Activated T-helper 2 cell treated with anti-CD3 and anti-CD28 coated beads, Interferon-gamma antibody, Interleukin-2, Interleukin-4, amounts not matched to agents 10 μg/mL and 5 μg/mL and 100 μg/mL, durations not matched to agents 14 hours and 24 hours and 36 hours (primary cell): ENCODE measurements at regions of chr4 and their contacts with region 1.

Region 1: DNA sequence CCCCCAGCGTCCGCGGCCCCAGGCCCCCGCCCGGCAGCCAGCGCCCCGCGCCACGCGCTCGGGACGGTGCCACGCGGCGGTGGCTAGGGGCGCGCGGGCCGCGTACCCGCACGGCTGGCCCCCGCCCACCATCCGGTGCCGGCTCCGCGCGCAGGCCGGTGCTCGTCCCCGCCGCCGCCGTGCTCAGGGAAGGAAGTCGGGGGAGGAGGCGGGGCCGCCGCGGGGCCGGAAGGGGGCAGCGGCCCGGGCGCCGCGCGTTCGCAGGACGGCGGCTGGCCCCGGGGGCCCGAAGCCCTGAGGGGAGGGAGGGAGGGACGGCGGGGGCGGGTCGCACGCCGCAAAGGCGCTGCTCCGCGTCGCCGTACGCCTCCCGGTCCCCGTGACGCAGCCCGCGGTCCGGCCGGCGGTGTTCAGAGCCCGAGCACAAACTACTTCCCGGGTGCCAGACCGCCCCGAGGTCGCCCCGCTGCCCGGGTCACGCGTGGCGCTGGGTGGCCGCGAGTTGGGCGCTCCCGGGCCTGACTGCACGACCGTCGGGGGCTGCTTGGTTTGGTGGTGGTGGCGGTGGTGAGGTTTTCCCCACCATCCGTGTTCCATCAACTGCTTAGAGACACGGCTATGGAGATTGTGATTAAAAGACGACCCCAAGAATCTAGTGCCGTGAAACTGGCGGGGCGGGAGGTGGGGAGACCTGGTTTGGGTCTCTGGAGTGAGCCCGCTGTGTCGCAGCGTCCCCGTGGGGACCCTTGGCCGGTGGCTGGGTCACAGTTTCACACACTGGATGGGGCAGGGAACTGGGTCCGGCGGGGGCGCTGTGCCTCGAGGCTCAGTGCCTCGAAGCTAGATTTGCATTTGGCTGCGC is at the start of gene DCTD:
- DNase-seq: peak; percentile 77
- H3K4me3 Mint-ChIP-seq: peak within 1 kb of the TSS; percentile 92
- H3K27ac Mint-ChIP-seq: peak within 1 kb of the TSS; percentile 97
- H3K4me1 Mint-ChIP-seq: peaks cover 35% of the 10 kb centered on the region
- H3K27me3 Mint-ChIP-seq: peaks cover 5% of the 10 kb centered on the region
- total RNA-seq, gene DCTD: 121 and 133 TPM in 2 replicates

Region 2: DNA sequence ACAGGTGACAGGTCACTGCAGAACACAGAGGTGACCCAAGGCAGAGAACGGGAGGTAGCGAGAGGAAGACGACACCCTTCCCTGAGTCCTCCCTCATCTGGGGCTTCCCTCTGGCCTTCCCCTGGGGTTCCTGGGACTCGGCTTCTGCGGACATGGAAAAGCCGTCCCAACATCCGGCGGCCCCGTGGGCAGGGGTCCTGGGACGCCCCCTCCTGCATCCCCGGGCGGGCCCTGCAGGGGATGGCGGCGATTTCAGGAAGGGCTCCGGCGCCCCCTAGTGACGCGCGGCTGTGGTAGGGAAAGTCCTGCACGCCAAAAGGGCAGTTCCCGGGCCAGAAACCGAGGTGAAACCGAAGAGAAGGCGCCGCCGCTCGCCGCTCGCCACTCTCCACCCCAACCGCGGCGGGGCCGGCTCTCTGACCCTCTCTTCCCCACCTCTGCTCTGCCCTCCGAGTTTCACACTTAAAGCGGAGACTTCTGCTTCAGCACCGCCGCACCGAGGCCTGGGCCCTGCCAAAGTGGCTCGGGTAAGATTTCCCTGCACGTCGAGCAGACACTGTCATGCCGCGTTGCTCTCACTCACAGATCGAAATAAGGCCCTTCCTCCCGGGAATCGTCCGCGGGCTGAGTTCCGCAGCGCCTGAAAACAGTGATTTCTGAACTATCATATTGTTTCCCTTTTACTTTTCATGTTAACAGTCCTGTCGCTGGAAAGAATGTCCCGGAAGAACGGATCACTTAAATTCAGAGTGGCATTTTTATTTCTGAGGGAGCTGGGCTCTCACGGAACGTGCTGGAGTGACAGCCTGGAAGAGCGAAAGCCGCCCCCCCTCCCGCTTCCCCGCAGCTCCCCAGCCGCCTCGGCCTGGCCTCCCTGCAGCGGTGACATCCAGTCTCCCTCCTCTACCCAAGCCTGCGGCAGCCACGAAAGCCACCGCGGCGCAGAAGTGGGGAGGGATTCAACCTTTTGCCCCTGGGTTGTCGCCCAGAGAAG is 110.9 kb before region 1 on chr4:
- intact Hi-C with region 1: loop called (anchors 1 kb)
- DNase-seq: peak; percentile 58
- H3K4me3 Mint-ChIP-seq: peak overlapping the region; percentile 57
- H3K27ac Mint-ChIP-seq: peak overlapping the region; percentile 39
- H3K4me1 Mint-ChIP-seq: peaks cover 16% of the 10 kb centered on the region
- H3K27me3 Mint-ChIP-seq: peaks cover 15% of the 10 kb centered on the region

Region 3: GRCh38 chr4:182843808-182844325 is 73.5 kb before region 1 on chr4:
- intact Hi-C with region 1: no loop called
- DNase-seq: no peak
- H3K4me3 Mint-ChIP-seq: no peak overlapping the region
- H3K27ac Mint-ChIP-seq: no peak overlapping the region
- H3K4me1 Mint-ChIP-seq: no peaks in the 10 kb centered on the region
- H3K27me3 Mint-ChIP-seq: no peaks in the 10 kb centered on the region

Region 4: GRCh38 chr4:182975806-182976205 is 58.4 kb after region 1 on chr4:
- intact Hi-C with region 1: loop called (anchors 2 kb)
- DNase-seq: peak; percentile 10
- H3K4me3 Mint-ChIP-seq: peak overlapping the region; percentile 41
- H3K27ac Mint-ChIP-seq: peak overlapping the region; percentile 92
- H3K4me1 Mint-ChIP-seq: peaks cover 27% of the 10 kb centered on the region
- H3K27me3 Mint-ChIP-seq: peaks cover 5% of the 10 kb centered on the region

Region 5: GRCh38 chr4:183011213-183011907 is 93.9 kb after region 1 on chr4:
- intact Hi-C with region 1: no loop called
- DNase-seq: no peak
- H3K4me3 Mint-ChIP-seq: no peak overlapping the region
- H3K27ac Mint-ChIP-seq: no peak overlapping the region
- H3K4me1 Mint-ChIP-seq: no peaks in the 10 kb centered on the region
- H3K27me3 Mint-ChIP-seq: peaks cover 6% of the 10 kb centered on the region

Region 6: GRCh38 chr4:183407128-183407585 is 489.7 kb after region 1 on chr4:
- intact Hi-C with region 1: loop called (anchors 5 kb)
- DNase-seq: peak; percentile 84
- H3K4me3 Mint-ChIP-seq: peak overlapping the region; percentile 79
- H3K27ac Mint-ChIP-seq: peak overlapping the region; percentile 65
- H3K4me1 Mint-ChIP-seq: peaks cover 13% of the 10 kb centered on the region
- H3K27me3 Mint-ChIP-seq: peaks cover 7% of the 10 kb centered on the region

Region 7: DNA sequence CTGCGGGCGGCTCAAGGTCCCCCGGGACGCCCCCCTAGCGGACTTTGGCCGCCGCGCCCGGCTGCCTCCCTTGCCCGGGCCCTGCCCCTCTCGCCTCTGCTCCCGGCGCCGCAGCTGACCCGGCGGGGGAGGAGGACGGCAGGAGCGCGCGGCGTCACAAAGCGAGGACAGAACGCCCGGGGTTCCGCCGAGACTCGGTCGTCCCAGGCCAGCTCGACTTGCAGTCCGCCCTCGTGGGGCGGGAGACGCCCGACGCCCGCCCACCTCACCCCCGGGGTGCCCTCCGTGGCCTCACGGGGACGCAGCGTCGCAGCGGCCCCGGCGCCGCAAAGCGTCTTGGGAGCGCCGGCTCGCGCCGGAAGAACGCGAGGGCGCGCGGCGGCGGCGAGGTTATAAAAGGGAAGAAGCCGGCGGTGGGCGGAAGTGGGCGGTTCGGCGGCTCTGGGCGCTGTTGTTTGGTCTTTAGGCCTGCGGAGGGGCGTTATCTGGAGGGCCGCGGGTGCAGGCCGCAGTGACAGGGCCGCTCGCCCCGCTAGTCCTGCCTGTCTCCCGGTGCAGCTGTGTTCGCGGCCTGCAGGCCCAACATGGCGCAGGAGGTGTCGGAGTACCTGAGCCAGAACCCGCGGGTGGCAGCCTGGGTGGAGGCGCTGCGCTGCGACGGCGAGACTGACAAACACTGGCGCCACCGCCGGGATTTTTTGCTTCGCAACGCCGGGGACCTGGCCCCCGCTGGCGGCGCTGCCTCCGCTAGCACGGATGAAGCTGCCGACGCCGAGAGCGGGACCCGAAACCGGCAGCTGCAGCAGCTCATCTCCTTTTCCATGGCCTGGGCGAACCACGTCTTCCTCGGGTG is 527.0 kb after region 1 on chr4 and contains the start of gene CDKN2AIP:
- intact Hi-C with region 1: loop called (anchors 2 kb)
- DNase-seq: peak; percentile 94
- H3K4me3 Mint-ChIP-seq: peak within 1 kb of the TSS; percentile 99
- H3K27ac Mint-ChIP-seq: peak within 1 kb of the TSS; percentile 98
- H3K4me1 Mint-ChIP-seq: peaks cover 38% of the 10 kb centered on the region
- H3K27me3 Mint-ChIP-seq: no peaks in the 10 kb centered on the region
- total RNA-seq, gene CDKN2AIP: 23.3 and 25.3 TPM in 2 replicates

Region 8: DNA sequence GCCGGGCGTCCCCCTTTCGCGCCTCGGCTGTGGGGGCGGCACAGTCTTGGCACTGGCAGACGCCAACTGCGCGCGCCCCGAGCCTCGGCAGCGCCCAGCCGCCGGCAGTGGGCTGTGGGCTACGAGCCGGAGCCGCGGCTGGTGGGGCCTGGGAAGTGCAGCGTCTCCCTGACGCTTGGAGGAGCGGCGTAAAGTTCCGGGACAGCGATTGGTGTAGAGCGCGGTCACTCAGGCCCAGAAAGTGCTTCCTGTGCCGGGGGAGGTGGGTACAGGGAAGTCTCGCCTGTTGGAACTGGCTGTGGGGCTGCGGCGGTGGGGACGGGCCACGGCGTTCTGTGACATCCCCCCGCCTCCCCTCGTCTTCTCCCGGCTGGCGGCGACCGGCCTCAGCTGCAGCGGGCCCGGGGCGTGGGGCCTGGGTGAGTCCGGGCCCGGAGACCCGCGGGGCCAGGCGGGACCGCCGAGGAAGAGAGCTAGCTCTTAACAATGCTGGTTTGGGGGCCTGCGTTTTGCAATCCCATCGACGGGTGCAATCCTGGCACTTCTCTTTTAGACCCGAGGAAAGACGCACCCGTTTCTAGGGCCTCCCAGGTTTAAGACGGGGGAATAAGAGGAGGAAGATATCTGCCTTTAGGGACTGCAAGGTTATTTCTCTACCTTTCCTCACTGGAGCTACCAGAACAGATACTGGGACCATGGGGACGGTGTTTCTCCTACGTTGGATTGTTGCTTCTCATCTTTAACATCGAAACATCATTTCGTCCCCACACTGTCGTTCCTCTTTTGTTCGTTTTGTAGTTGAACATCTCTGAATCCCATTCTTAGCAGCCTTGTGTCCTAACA is 741.8 kb after region 1 on chr4 and contains the starts of genes RWDD4 and TRAPPC11:
- intact Hi-C with region 1: loop called (anchors 5 kb)
- DNase-seq: peak; percentile 95
- H3K4me3 Mint-ChIP-seq: peak within 1 kb of the TSS; percentile 93
- H3K27ac Mint-ChIP-seq: peak within 1 kb of the TSS; percentile 96
- H3K4me1 Mint-ChIP-seq: peaks cover 22% of the 10 kb centered on the region
- H3K27me3 Mint-ChIP-seq: no peaks in the 10 kb centered on the region
- total RNA-seq, gene RWDD4: 26.3 and 27.6 TPM in 2 replicates
- total RNA-seq, gene TRAPPC11: 28.1 and 32.0 TPM in 2 replicates

Region 9: GRCh38 chr4:184514121-184514988 is 1596.9 kb after region 1 on chr4:
- intact Hi-C with region 1: loop called (anchors 10 kb)
- DNase-seq: peak; percentile 53
- H3K4me3 Mint-ChIP-seq: peak overlapping the region; percentile 66
- H3K27ac Mint-ChIP-seq: peak overlapping the region; percentile 90
- H3K4me1 Mint-ChIP-seq: peaks cover 51% of the 10 kb centered on the region
- H3K27me3 Mint-ChIP-seq: no peaks in the 10 kb centered on the region